ENCODE measurements at regions of chr22 and their contacts with region 1.

Region 1: GRCh38 chr22:17171313-17172171 is 12.5 kb upstream of the HDHD5 start:
- DNase-seq: peak; percentile 43 to 88 (median 74)
- ATAC-seq: peak; percentile 89
- H3K4me3 ChIP-seq: peak overlapping the region; percentile 64 to 88
- H3K4me3 Mint-ChIP-seq: peak overlapping the region; percentile 81
- H3K27ac ChIP-seq: peak overlapping the region; percentile 40 to 65
- H3K27ac Mint-ChIP-seq: peak overlapping the region; percentile 67
- H3K4me1 ChIP-seq: peaks cover 5% of the 10 kb centered on the region
- H3K4me1 Mint-ChIP-seq: peaks cover 8% of the 10 kb centered on the region
- H3K27me3 ChIP-seq: no peaks in the 10 kb centered on the region
- H3K27me3 Mint-ChIP-seq: no peaks in the 10 kb centered on the region
- CTCF ChIP-seq: peak; percentile 81

Region 2: GRCh38 chr22:17077255-17077654 is 94.3 kb before region 1 on chr22:
- CTCF ChIA-PET with region 1: interaction called, 114 read pairs
- POLR2A ChIA-PET with region 1: interaction called, 4 read pairs
- intact Hi-C with region 1: loop called (anchors 1 kb)
- DNase-seq: no peak
- ATAC-seq: no peak
- H3K4me3 ChIP-seq: no peak overlapping the region
- H3K4me3 Mint-ChIP-seq: no peak overlapping the region
- H3K27ac ChIP-seq: no peak overlapping the region
- H3K27ac Mint-ChIP-seq: no peak overlapping the region
- H3K4me1 ChIP-seq: peaks cover 8% of the 10 kb centered on the region
- H3K4me1 Mint-ChIP-seq: peaks cover 11% of the 10 kb centered on the region
- H3K27me3 ChIP-seq: no peaks in the 10 kb centered on the region
- H3K27me3 Mint-ChIP-seq: no peaks in the 10 kb centered on the region
- CTCF ChIP-seq: no peak

Region 3: DNA sequence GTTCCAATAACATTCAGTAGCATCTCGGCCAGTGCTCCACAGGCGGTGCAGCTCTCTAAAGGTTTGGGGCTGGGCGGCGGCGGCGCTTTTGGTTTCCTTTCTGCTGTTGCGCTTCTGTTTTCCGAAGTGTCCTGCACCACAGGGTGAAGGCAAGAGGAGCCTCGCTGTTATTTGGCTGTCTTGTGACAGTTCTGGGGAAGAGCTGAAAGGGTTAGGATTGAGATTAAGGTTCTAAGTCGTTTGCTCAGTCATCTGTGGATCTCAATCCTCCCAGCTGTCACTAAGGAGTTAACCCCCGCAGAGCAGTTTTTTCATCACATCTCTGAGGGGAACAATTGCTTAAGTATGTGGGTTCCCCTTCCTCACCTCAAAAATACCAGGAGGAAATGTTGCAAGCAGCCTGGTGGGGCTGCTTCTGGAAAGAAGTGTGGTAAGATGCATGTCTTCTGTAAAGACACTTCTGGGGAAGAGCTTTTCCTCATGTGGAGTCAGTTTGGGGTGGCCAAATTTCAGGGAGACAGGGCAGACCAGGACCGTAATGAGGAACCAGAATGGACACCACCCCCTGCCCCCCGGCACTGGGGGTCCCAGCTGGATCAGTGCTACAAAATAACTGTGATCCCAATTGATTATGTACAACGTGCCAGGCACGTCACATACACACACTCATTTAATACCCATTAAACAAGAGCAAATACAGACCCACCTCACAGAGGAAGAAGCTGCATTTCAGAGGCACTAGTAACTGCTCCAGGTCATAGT is 64.6 kb before region 1 on chr22:
- CTCF ChIA-PET with region 1: interaction called, 12 read pairs
- POLR2A ChIA-PET with region 1: interaction called, 3 read pairs
- intact Hi-C with region 1: no loop called
- DNase-seq: peak in 3 of 9 experiments; percentile 21 to 44 (median 37)
- ATAC-seq: peak; percentile 72
- H3K4me3 ChIP-seq: peak overlapping the region; percentile 24 to 28
- H3K4me3 Mint-ChIP-seq: peak overlapping the region; percentile 80
- H3K27ac ChIP-seq: peak overlapping the region; percentile 5 to 14
- H3K27ac Mint-ChIP-seq: peak overlapping the region; percentile 87
- H3K4me1 ChIP-seq: peaks cover 55% of the 10 kb centered on the region
- H3K4me1 Mint-ChIP-seq: peaks cover 48% of the 10 kb centered on the region
- H3K27me3 ChIP-seq: no peaks in the 10 kb centered on the region
- H3K27me3 Mint-ChIP-seq: no peaks in the 10 kb centered on the region
- CTCF ChIP-seq: no peak

Region 4: DNA sequence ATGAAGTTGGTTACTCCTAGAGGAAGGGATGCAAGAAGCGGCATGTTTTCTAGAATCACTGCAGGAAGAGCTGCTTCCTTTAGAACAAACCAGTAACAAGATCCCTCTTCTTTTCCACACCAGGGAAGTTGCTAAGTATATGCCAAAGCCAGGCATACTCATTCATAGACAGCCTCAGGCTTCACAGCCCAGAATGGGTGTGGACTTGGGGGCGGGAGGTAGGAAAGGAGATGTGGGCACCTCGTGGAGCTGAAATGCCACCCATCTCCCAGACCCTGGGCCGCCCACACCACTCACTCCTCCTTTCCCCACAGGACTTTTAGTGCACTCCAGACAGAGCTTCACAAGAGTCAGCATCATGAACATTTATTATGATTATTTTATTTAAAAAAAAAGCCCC is 34.4 kb before region 1 on chr22:
- CTCF ChIA-PET with region 1: interaction called, 14 read pairs
- POLR2A ChIA-PET with region 1: no interaction called
- intact Hi-C with region 1: no loop called
- DNase-seq: no peak
- ATAC-seq: no peak
- H3K4me3 ChIP-seq: no peak overlapping the region
- H3K4me3 Mint-ChIP-seq: no peak overlapping the region
- H3K27ac ChIP-seq: no peak overlapping the region
- H3K27ac Mint-ChIP-seq: no peak overlapping the region
- H3K4me1 ChIP-seq: no peaks in the 10 kb centered on the region
- H3K4me1 Mint-ChIP-seq: no peaks in the 10 kb centered on the region
- H3K27me3 ChIP-seq: no peaks in the 10 kb centered on the region
- H3K27me3 Mint-ChIP-seq: no peaks in the 10 kb centered on the region
- CTCF ChIP-seq: no peak

Region 5: DNA sequence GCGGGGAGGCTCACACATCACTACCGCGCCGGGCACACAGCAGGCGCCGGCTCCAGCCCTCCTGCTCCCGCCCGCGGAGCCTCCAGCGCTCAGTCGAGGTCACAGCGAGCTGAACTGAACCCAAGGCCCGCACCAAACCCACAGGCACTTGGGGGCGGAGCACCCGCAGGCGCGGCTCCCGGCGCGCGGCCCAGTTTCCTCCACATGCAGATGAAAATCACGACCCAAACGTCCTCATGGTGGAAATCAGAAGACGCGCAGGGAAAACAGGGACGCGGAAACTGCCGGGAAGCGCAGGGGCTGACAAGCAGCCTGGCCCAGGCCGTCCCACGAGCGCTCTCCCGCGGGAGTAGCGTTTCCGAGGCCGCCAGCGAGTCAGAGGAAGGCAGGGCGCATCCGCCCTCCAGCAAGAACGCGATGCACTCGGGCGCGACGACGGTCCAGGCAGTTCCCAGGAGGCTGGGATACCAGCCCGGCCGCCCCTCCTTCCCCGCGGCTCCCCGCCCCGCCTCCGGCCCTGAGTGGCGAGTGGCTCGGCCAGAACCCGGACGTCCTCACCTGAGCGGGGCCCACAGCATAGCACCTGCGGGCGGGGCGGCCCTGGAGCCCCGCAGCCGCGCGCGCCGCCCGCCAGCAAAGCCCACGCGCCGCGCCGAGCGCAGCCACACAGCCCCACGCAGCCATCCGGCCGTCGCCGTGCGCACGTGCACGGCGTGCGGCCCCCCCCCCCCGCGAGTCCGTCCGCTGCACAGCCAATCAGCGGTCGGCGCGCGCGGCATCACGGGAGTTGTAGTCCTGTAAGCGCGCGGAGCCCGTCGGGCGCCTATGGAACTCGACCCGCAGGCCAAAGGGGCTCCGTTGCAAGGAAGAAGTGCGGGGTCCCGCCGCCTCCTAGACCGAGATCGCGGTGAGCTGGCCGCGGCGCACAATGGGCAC is 12.7 kb before region 1 on chr22 and contains the start of gene HDHD5:
- CTCF ChIA-PET with region 1: interaction called, 48 read pairs
- POLR2A ChIA-PET with region 1: interaction called, 11 read pairs
- intact Hi-C with region 1: loop called (anchors 1 kb)
- DNase-seq: peak; percentile 78 to 93 (median 90)
- ATAC-seq: peak; percentile 92
- H3K4me3 ChIP-seq: peak within 1 kb of the TSS; percentile 80 to 89
- H3K4me3 Mint-ChIP-seq: peak within 1 kb of the TSS; percentile 86
- H3K27ac ChIP-seq: peak within 1 kb of the TSS; percentile 56 to 64
- H3K27ac Mint-ChIP-seq: peak within 1 kb of the TSS; percentile 55
- H3K4me1 ChIP-seq: peaks cover 27% of the 10 kb centered on the region
- H3K4me1 Mint-ChIP-seq: peaks cover 36% of the 10 kb centered on the region
- H3K27me3 ChIP-seq: no peaks in the 10 kb centered on the region
- H3K27me3 Mint-ChIP-seq: no peaks in the 10 kb centered on the region
- CTCF ChIP-seq: no peak
- total RNA-seq, gene HDHD5: 9.2 to 11.0 TPM

Region 6: GRCh38 chr22:17201285-17201945 is 29.9 kb after region 1 on chr22:
- CTCF ChIA-PET with region 1: interaction called, 18 read pairs
- POLR2A ChIA-PET with region 1: no interaction called
- intact Hi-C with region 1: no loop called
- DNase-seq: no peak
- ATAC-seq: no peak
- H3K4me3 ChIP-seq: no peak overlapping the region
- H3K4me3 Mint-ChIP-seq: no peak overlapping the region
- H3K27ac ChIP-seq: no peak overlapping the region
- H3K27ac Mint-ChIP-seq: peak overlapping the region; percentile 56
- H3K4me1 ChIP-seq: no peaks in the 10 kb centered on the region
- H3K4me1 Mint-ChIP-seq: peaks cover 8% of the 10 kb centered on the region
- H3K27me3 ChIP-seq: no peaks in the 10 kb centered on the region
- H3K27me3 Mint-ChIP-seq: no peaks in the 10 kb centered on the region
- CTCF ChIP-seq: no peak

Region 7: GRCh38 chr22:17501679-17502285 is 330.2 kb after region 1 on chr22:
- CTCF ChIA-PET with region 1: interaction called, 66 read pairs
- POLR2A ChIA-PET with region 1: interaction called, 9 read pairs
- intact Hi-C with region 1: loop called (anchors 1 kb)
- DNase-seq: peak in 3 of 9 experiments; percentile 30 to 77 (median 64)
- ATAC-seq: peak; percentile 73
- H3K4me3 ChIP-seq: no peak overlapping the region
- H3K4me3 Mint-ChIP-seq: no peak overlapping the region
- H3K27ac ChIP-seq: no peak overlapping the region
- H3K27ac Mint-ChIP-seq: no peak overlapping the region
- H3K4me1 ChIP-seq: no peaks in the 10 kb centered on the region
- H3K4me1 Mint-ChIP-seq: peaks cover 2% of the 10 kb centered on the region
- H3K27me3 ChIP-seq: no peaks in the 10 kb centered on the region
- H3K27me3 Mint-ChIP-seq: peaks cover 8% of the 10 kb centered on the region
- CTCF ChIP-seq: peak; percentile 70

Measured in CD8-positive, alpha-beta T cell (primary cell).